Astrocyte of the cerebellum (primary cell): ENCODE measurements at regions of chr3 and their contacts with region 1.

Region 1: GRCh38 chr3:58835086-58835485 is 168.5 kb upstream of the FAM3D start:
- DNase-seq: peak; percentile 20
- H3K4me3 ChIP-seq: no peak overlapping the region
- CTCF ChIP-seq: no peak

Region 2: DNA sequence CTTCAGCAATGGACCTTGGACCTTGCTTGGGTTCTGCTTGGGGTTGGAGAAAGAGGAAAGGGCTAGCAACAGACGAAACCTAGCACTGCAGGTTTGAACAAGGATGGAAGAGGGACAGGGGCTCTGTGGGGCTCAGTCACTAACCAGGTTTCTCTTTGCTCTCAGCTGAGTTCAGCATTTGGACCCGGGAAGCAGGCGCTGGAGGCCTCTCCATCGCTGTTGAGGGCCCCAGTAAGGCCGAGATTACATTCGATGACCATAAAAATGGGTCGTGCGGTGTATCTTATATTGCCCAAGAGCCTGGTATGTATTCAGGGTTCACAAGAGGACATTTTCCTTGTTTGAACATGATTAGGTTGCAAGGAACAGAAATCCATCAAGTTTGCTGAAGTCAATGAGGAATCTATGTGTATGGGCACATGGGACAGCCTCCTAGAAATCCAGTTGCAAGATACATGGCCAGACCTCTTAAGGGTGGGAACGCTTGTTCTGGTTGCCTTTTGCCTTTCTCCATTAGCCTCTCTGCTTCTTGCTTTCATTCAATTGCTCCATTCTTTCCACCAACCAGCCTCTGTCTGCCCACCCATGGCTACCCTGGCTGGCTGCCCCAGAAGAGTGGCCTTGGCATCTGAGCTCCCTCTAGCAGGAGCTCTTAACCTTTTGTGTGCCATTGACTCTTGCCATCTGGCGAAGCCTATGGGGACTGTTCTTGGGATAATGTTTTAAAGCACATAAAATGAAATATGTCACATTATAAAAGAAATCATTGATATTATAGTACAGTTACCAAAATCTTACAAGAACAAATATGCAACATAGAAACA is 680.2 kb before region 1 on chr3:
- in situ Hi-C with region 1: no loop called
- DNase-seq: no peak
- H3K4me3 ChIP-seq: no peak overlapping the region
- CTCF ChIP-seq: no peak

Region 3: DNA sequence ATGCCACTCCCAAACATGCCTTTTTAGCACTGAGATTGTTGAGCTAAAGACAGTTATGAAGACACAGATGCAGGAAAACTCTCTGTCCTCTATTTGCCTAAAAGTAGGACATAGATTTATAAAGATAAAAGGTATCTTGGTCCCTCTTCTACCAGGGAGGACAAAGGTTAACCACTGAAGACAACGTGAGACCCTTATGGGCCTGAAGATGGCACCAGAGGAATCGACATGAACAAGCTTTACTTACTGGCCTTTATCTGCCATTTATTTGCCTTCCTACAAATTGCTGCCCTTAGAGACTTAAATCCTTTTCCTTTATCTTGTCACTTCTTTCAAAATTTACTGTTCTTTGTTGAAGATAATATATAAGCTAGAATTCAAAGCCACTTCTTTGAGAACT is 58.9 kb before region 1 on chr3:
- in situ Hi-C with region 1: no loop called
- DNase-seq: no peak
- H3K4me3 ChIP-seq: no peak overlapping the region
- CTCF ChIP-seq: no peak

Region 4: GRCh38 chr3:58798312-58798711 is 36.8 kb before region 1 on chr3:
- in situ Hi-C with region 1: loop called (anchors 5 kb)
- DNase-seq: no peak
- H3K4me3 ChIP-seq: no peak overlapping the region
- CTCF ChIP-seq: no peak